ENCODE measurements at regions of chr9 and their contacts with region 1.

Region 1: GRCh38 chr9:127785023-127785932 is 556 bp upstream of the CDK9 start:
- DNase-seq: peak; percentile 84 to 95 (median 91)
- ATAC-seq: peak; percentile 54 to 56
- H3K4me3 Mint-ChIP-seq: peak overlapping the region; percentile 71 to 92 (median 88)
- H3K27ac Mint-ChIP-seq: peak overlapping the region; percentile 93 to 99 (median 97)
- H3K4me1 Mint-ChIP-seq: peaks cover 29 to 74% (median 60%) of the 10 kb centered on the region in 4 donors
- H3K27me3 Mint-ChIP-seq: no peaks in the 10 kb centered on the region

Region 2: GRCh38 chr9:127676636-127677035 is 108.6 kb before region 1 on chr9:
- POLR2A ChIA-PET with region 1: no interaction called
- DNase-seq: no peak
- ATAC-seq: no peak
- H3K4me3 Mint-ChIP-seq: no peak overlapping the region
- H3K27ac Mint-ChIP-seq: peak overlapping the region in 1 of 10 donors; percentile 9
- H3K4me1 Mint-ChIP-seq: no peaks in the 10 kb centered on the region
- H3K27me3 Mint-ChIP-seq: no peaks in the 10 kb centered on the region

Region 3: GRCh38 chr9:127694890-127695720 is 90.2 kb before region 1 on chr9:
- POLR2A ChIA-PET with region 1: no interaction called
- DNase-seq: no peak
- ATAC-seq: no peak
- H3K4me3 Mint-ChIP-seq: no peak overlapping the region
- H3K27ac Mint-ChIP-seq: peak overlapping the region in 2 of 10 donors; percentile 6 to 24
- H3K4me1 Mint-ChIP-seq: peaks cover 8 to 12% (median 12%) of the 10 kb centered on the region in 4 donors
- H3K27me3 Mint-ChIP-seq: no peaks in the 10 kb centered on the region

Region 4: GRCh38 chr9:127734747-127735529 is 50.3 kb before region 1 on chr9 and contains the start of gene TOR2A:
- POLR2A ChIA-PET with region 1: interaction called, 54 read pairs
- DNase-seq: peak; percentile 98 to 99 (median 99)
- ATAC-seq: peak; percentile 89 to 91
- H3K4me3 Mint-ChIP-seq: peak within 1 kb of the TSS; percentile 80 to 98 (median 96)
- H3K27ac Mint-ChIP-seq: peak within 1 kb of the TSS; percentile 82 to 98 (median 94)
- H3K4me1 Mint-ChIP-seq: peaks cover 9 to 20% (median 14%) of the 10 kb centered on the region in 4 donors
- H3K27me3 Mint-ChIP-seq: peaks cover 0 to 1% (median 0%) of the 10 kb centered on the region in 5 donors
- polyA plus RNA-seq, gene TOR2A: 18.1 to 24.7 (median 23.5) TPM

Region 5: DNA sequence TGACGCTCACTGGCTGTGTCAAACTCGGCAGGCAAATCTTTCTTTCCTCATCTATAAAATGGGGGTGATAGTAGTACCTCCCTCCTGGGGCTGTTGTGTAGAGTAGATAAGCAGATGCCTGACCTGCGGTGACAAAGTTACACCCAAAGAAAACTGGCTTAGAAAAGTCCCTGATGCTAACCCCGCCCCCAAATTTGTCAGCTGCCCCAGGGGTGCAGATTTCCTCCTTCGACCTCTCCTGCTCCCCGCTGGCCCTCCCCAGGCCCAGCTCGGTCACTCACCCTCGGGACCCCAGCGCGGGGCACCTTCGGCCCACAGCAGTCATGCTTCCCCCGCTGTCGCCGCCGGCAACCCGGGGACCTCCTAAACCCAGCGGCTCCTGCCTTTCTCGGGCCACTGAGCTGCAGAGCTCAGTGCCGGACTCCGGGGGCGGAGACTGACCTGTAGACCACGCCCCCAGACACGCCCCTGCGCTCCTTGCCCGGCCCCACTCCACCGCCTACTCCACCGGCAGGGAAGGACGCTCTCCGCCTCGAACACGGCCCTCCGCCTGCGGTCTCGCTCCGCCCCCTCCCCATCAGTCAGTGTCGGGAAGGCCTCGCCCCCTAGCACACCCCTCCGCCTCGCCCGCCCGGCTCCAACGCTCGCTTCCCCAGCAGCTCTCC is 14.2 kb before region 1 on chr9:
- POLR2A ChIA-PET with region 1: interaction called, 237 read pairs
- DNase-seq: peak; percentile 85 to 97 (median 91)
- ATAC-seq: peak; percentile 79 to 82
- H3K4me3 Mint-ChIP-seq: peak overlapping the region; percentile 83 to 94 (median 89)
- H3K27ac Mint-ChIP-seq: peak overlapping the region; percentile 93 to 98 (median 95)
- H3K4me1 Mint-ChIP-seq: peaks cover 40 to 85% (median 77%) of the 10 kb centered on the region in 4 donors
- H3K27me3 Mint-ChIP-seq: no peaks in the 10 kb centered on the region

Region 6: GRCh38 chr9:127802576-127803443 is 17.5 kb after region 1 on chr9 and contains the start of gene FPGS:
- POLR2A ChIA-PET with region 1: interaction called, 46 read pairs
- DNase-seq: peak; percentile 70 to 91 (median 84)
- ATAC-seq: peak; percentile 82 to 89
- H3K4me3 Mint-ChIP-seq: peak within 1 kb of the TSS; percentile 87 to 97 (median 94)
- H3K27ac Mint-ChIP-seq: peak within 1 kb of the TSS; percentile 84 to 97 (median 94)
- H3K4me1 Mint-ChIP-seq: peaks cover 4 to 47% (median 35%) of the 10 kb centered on the region in 4 donors
- H3K27me3 Mint-ChIP-seq: no peaks in the 10 kb centered on the region
- polyA plus RNA-seq, gene FPGS: 51.7 to 54.8 (median 53.4) TPM

Region 7: GRCh38 chr9:127869310-127870152 is 84.3 kb after region 1 on chr9:
- POLR2A ChIA-PET with region 1: interaction called, 17 read pairs
- DNase-seq: peak; percentile 55 to 88 (median 72)
- ATAC-seq: peak; percentile 48 to 79
- H3K4me3 Mint-ChIP-seq: no peak overlapping the region
- H3K27ac Mint-ChIP-seq: peak overlapping the region in 4 of 10 donors; percentile 43 to 67 (median 54)
- H3K4me1 Mint-ChIP-seq: peaks cover 13 to 22% (median 16%) of the 10 kb centered on the region in 4 donors
- H3K27me3 Mint-ChIP-seq: no peaks in the 10 kb centered on the region

Region 8: DNA sequence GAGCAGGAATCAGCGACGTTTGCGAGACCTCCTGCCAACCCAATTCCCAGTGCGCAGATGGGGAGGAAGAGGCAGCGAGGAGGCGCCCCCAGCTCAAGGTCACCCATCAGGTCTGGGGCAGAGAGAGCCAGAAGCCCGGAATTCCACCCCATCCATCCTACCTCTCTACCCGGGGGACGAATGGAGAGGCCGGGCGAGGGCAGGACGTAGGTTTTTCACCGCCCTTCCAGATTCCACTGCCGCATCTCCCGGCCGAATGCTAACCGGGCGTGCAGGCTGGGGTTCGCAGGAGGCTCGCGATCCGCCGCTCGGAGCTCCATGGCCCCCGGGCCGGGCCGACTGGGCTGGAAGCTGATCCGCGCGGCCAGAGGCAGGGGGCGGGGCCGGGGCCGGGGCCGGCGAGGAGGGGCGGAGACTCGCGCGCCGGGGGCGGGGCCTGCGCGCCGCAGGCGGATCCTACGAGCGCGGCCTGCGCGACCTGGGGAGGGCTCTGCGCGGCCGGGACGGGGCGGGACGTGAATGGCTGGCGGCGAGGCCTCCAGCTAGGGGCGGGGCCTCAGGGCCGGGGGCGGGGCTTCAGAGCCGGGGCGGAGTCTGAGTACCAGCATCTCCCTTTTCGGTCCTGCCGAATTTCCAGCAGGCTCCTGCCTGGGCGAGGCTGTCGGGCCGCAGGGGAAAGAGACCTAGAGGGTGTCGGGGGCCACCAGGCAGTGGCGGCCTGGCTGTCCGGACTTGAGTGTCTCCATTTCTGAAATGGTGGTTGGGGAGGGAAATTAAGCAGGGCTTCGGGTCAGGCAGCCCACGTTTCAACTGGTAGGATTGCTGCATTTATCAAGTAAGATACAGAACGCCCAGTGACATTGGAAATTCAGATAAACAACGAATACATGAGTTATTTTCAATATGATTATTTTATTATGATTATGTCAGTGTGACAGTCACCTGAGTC is 131.7 kb after region 1 on chr9 and contains the start of gene ST6GALNAC4:
- POLR2A ChIA-PET with region 1: interaction called, 23 read pairs
- DNase-seq: peak; percentile 85 to 98 (median 92)
- ATAC-seq: peak; percentile 85 to 88
- H3K4me3 Mint-ChIP-seq: peak within 1 kb of the TSS; percentile 85 to 95 (median 92)
- H3K27ac Mint-ChIP-seq: peak within 1 kb of the TSS; percentile 83 to 98 (median 96)
- H3K4me1 Mint-ChIP-seq: peaks cover 25 to 70% (median 59%) of the 10 kb centered on the region in 4 donors
- H3K27me3 Mint-ChIP-seq: no peaks in the 10 kb centered on the region
- polyA plus RNA-seq, gene ST6GALNAC4: 19.8 to 34.4 (median 22.1) TPM

Measured in naive thymus-derived CD8-positive, alpha-beta T cell (primary cell).